Mammary epithelial cell (primary cell): ENCODE measurements at regions of chr22 and their contacts with region 1.

Region 1: GRCh38 chr22:50481440-50482106 is at the start of gene ADM2:
- DNase-seq: no peak
- H3K4me3 ChIP-seq: peak within 1 kb of the TSS; percentile 56 to 71 (median 57)
- H3K27ac ChIP-seq: no peak within 1 kb of the TSS
- H3K4me1 ChIP-seq: peaks cover 8% of the 10 kb centered on the region
- H3K27me3 ChIP-seq: no peaks in the 10 kb centered on the region
- CTCF ChIP-seq: no peak
- total RNA-seq, gene ADM2: 21.2 to 30.9 TPM

Region 2: GRCh38 chr22:50185384-50186087 is 296.0 kb before region 1 on chr22 and contains the start of gene TRABD:
- CTCF ChIA-PET with region 1: no interaction called
- dilution Hi-C with region 1: loop called (anchors 10 kb)
- in situ Hi-C with region 1: no loop called
- intact Hi-C with region 1: no loop called
- DNase-seq: peak; percentile 81
- H3K4me3 ChIP-seq: peak within 1 kb of the TSS; percentile 75 to 98 (median 75)
- H3K27ac ChIP-seq: peak within 1 kb of the TSS; percentile 40
- H3K4me1 ChIP-seq: peaks cover 38% of the 10 kb centered on the region
- H3K27me3 ChIP-seq: no peaks in the 10 kb centered on the region
- CTCF ChIP-seq: no peak
- total RNA-seq, gene TRABD: 25.8 to 63.5 TPM